ENCODE measurements at regions of chr12 and their contacts with region 1.

Region 1: DNA sequence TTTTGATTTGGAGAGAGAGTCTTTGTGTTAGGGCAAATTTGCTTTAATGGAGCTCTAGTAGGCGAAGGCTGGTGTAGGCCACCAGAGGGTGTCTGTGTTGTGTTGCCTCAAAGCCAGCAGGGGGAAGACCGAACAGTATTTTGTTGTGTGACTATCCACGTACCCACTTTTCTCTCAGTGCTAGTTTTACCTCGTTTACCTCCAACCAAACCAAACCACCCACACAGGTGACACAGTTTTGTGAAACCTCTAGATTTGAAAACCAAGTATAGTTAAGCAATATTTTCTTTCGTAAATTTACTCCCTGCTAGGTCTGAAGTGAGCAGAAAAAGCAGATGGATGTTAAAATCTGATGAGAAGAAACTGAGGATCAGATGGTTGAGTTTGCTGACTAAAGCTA is 36.3 kb upstream of the NPFF start:
- DNase-seq: peak; percentile 73
- H3K4me3 Mint-ChIP-seq: no peak overlapping the region
- H3K27ac Mint-ChIP-seq: peak overlapping the region; percentile 66
- H3K4me1 Mint-ChIP-seq: peaks cover 11% of the 10 kb centered on the region
- H3K27me3 Mint-ChIP-seq: no peaks in the 10 kb centered on the region

Region 2: GRCh38 chr12:53441040-53441833 is 102.3 kb before region 1 on chr12 and contains the start of gene PRR13:
- CTCF ChIA-PET with region 1: no interaction called
- POLR2A ChIA-PET with region 1: no interaction called
- intact Hi-C with region 1: no loop called
- DNase-seq: peak; percentile 100
- H3K4me3 Mint-ChIP-seq: peak within 1 kb of the TSS; percentile 97
- H3K27ac Mint-ChIP-seq: peak within 1 kb of the TSS; percentile 93
- H3K4me1 Mint-ChIP-seq: peaks cover 37% of the 10 kb centered on the region
- H3K27me3 Mint-ChIP-seq: no peaks in the 10 kb centered on the region
- total RNA-seq, gene PRR13: 218 to 221 TPM

Region 3: GRCh38 chr12:53561590-53561953 is 18.0 kb after region 1 on chr12:
- CTCF ChIA-PET with region 1: interaction called, 10 read pairs
- POLR2A ChIA-PET with region 1: no interaction called
- intact Hi-C with region 1: loop called (anchors 1 kb)
- DNase-seq: no peak
- H3K4me3 Mint-ChIP-seq: no peak overlapping the region
- H3K27ac Mint-ChIP-seq: peak overlapping the region; percentile 75
- H3K4me1 Mint-ChIP-seq: peaks cover 54% of the 10 kb centered on the region
- H3K27me3 Mint-ChIP-seq: no peaks in the 10 kb centered on the region

Region 4: DNA sequence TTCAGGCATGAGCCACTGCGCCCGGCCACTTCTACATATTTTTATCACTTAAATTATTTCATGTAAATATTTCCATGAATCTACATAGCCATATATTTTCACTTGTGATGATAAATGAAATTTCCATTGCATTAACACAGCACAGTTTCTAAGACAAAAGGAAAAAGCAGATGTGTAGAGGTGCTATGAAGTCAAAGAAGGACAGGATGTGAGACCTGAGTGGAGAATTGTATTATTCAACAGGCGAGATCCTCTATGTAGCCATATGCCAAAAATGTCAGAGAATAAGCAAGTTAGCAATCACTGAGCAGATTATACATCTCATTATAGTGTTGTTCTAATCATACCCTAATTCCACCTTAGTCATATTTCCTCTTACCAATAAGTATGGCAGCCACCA is 44.6 kb after region 1 on chr12:
- CTCF ChIA-PET with region 1: interaction called, 13 read pairs
- POLR2A ChIA-PET with region 1: no interaction called
- intact Hi-C with region 1: no loop called
- DNase-seq: no peak
- H3K4me3 Mint-ChIP-seq: no peak overlapping the region
- H3K27ac Mint-ChIP-seq: no peak overlapping the region
- H3K4me1 Mint-ChIP-seq: peaks cover 34% of the 10 kb centered on the region
- H3K27me3 Mint-ChIP-seq: no peaks in the 10 kb centered on the region

Region 5: DNA sequence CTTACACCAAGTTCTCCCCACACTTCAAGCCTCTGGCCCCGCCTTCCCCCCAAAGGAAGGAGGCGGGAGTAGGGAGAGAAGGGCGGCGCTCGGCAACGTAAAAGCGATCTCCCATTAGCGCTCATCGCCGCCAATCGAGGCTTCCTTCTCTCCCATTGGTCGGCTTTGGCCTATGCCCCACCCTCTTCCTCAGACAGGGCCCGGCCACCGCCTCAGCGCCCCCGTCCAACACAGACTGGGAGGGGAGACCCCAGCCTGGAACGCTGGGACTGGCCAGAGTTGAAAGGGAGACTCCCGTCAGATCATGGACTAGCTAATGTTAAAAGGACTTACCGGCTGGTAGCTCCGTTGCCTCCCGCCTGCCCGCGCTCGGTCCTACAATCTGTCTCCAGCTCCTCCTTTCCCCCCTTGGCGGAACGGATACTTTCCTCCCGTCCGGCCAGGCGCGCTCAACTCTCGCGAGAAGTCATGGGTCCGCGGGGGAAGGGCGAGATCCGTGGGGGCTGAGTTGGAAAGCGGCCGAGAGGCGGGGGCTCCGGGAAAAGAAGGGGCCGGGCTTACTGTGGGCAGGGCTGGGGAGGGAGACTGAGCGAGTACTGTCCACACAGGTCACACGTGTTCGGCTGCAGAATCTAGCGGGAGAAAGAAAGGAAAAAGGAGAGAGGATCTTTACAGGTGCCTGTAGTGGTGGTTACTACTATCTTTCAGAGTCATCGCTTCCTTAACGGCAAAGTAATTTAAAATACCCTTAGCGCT is 82.6 kb after region 1 on chr12 and contains the start of gene ATF7:
- CTCF ChIA-PET with region 1: interaction called, 11 read pairs
- POLR2A ChIA-PET with region 1: no interaction called
- intact Hi-C with region 1: loop called (anchors 1 kb)
- DNase-seq: peak; percentile 99
- H3K4me3 Mint-ChIP-seq: peak within 1 kb of the TSS; percentile 97
- H3K27ac Mint-ChIP-seq: peak within 1 kb of the TSS; percentile 94
- H3K4me1 Mint-ChIP-seq: peaks cover 43% of the 10 kb centered on the region
- H3K27me3 Mint-ChIP-seq: no peaks in the 10 kb centered on the region
- total RNA-seq, gene ATF7: 19.3 to 20.7 TPM

Region 6: DNA sequence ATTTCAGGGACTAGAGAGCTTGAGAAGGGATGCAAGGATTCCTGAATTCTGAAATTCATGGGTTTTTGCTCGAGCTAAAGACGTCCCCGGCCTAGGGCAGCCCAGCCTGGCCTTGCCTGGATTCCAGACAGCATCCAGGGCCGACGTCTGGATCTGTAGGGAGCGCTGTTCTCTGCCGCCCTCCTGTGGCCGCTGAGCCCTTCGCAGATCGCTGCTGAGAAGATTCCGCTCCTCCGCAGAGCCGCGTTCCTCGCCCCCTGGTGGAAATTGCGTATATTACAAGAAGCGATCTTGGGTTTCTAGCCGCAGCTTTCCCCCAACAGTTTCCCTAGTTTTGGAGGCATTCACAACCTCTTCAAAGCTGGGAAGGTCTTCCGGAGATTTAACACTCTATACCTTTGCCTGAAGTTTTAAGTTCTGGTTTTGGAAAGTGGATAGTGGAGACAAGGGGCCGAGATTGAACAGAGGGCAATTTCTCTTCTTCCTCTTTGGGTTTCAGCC is 203.1 kb after region 1 on chr12:
- CTCF ChIA-PET with region 1: interaction called, 64 read pairs
- POLR2A ChIA-PET with region 1: interaction called, 3 read pairs
- intact Hi-C with region 1: loop called (anchors 1 kb)
- DNase-seq: peak; percentile 92
- H3K4me3 Mint-ChIP-seq: no peak overlapping the region
- H3K27ac Mint-ChIP-seq: no peak overlapping the region
- H3K4me1 Mint-ChIP-seq: peaks cover 20% of the 10 kb centered on the region
- H3K27me3 Mint-ChIP-seq: peaks cover 26% of the 10 kb centered on the region

Measured in activated CD4-positive, alpha-beta memory T cell treated with anti-CD3 and anti-CD28 coated beads for 36 hours (primary cell).